ENCODE measurements at regions of chr4 and their contacts with region 1.

Region 1: DNA sequence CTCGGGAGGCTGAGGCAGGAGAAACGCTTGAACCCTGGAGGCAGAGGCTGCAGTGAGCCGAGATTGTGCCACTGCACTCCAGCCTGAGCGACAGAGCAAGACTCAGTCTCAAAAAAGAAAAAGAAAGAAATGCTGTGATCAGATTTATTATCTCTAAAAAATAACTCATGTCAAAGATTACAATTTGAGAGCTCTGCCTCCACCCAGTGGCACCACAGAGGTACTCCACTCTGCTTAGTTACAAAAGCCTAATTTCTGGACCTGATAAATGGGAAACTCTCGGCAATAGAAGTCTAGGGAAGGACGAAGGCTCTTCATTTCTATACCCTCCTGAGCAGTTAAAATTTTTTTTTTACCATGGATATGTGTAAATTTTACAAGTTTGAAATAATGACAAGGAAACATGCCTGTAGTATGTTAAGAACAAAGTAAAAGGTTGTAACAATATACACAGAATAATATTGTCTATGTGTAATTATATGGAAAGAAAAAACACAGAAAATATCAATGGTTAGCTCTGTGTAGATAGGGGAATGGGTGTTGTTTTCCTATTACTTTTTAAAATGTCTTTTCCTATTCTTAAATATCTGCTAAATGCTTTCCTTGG is 149.8 kb downstream of the STIM2 start:
- DNase-seq: peak; percentile 56 to 84
- H3K4me3 ChIP-seq: no peak overlapping the region
- H3K27ac ChIP-seq: peak overlapping the region in 3 of 5 donors; percentile 7 to 47 (median 31)
- H3K4me1 ChIP-seq: peaks cover 8 to 38% (median 25%) of the 10 kb centered on the region in 4 donors
- H3K27me3 ChIP-seq: no peaks in the 10 kb centered on the region
- CTCF ChIP-seq: peak in 5 of 7 experiments; percentile 80 to 92 (median 86)
- EP300 ChIP-seq: no peak
- POLR2A ChIP-seq: no peak

Region 2: DNA sequence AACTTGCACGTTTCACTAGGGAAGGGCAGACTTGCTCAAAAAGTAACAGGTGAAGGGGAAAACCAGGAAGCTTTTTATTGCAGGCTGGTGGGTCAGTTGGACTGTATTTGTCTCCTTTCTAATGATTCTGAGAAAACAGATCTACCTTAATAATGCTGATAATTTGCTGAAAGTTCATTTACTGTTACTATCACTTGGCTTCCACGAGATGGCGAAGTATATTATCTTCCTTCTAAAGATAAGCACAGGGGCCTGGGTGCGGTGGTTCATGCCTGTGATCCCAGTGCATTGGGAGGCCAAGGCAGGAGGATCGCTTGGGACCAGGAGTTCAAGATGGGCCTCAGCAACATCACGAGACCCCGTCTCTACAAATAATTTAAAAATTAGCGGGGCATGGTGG is 536.5 kb before region 1 on chr4:
- intact Hi-C with region 1: loop called (anchors 10 kb)
- DNase-seq: no peak
- H3K4me3 ChIP-seq: no peak overlapping the region
- H3K27ac ChIP-seq: no peak overlapping the region
- H3K4me1 ChIP-seq: no peaks in the 10 kb centered on the region
- H3K27me3 ChIP-seq: no peaks in the 10 kb centered on the region
- CTCF ChIP-seq: no peak
- EP300 ChIP-seq: no peak
- POLR2A ChIP-seq: no peak

Region 3: DNA sequence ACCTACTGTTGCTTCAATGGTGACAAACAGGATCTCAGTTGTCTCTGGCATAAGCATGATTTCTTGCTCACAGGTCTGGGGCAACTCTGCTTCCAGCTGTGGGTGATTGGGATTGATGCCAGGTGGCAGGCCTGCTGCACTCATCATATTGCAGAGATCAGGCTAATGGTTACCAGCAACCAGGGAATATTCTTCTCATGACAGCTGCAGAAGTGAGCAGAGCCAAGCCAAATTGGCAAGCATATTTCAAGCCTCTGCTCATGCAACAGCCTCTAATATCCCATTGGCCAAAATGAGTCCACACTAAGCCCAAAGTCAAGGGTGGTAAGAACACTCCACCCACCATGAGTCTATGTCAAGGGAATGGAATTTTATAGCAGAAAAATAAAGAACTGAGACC is 453.3 kb before region 1 on chr4:
- intact Hi-C with region 1: no loop called
- DNase-seq: peak in 1 of 2 donors; percentile 22
- H3K4me3 ChIP-seq: no peak overlapping the region
- H3K27ac ChIP-seq: no peak overlapping the region
- H3K4me1 ChIP-seq: no peaks in the 10 kb centered on the region
- H3K27me3 ChIP-seq: no peaks in the 10 kb centered on the region
- CTCF ChIP-seq: no peak
- EP300 ChIP-seq: no peak
- POLR2A ChIP-seq: no peak

Measured in stomach (tissue), 19 donors.